WTC11 (cell line): ENCODE measurements at regions of chr10 and their contacts with region 1.

Region 1: GRCh38 chr10:103153302-103154197 is 39.5 kb downstream of the NT5C2 start:
- DNase-seq: no peak
- ATAC-seq: peak; percentile 74
- H3K4me3 Mint-ChIP-seq: peak overlapping the region; percentile 31; the same call in 1 of the 2 replicates
- H3K27ac Mint-ChIP-seq: peak overlapping the region; percentile 99
- H3K4me1 Mint-ChIP-seq: peaks cover 28% of the 10 kb centered on the region
- H3K27me3 Mint-ChIP-seq: no peaks in the 10 kb centered on the region
- CTCF ChIP-seq: no peak

Region 2: GRCh38 chr10:103238506-103239252 is 85.1 kb after region 1 on chr10:
- CTCF ChIA-PET with region 1: interaction called, 21 read pairs
- POLR2A ChIA-PET with region 1: interaction called, 4 read pairs
- DNase-seq: peak; percentile 52
- ATAC-seq: peak; percentile 95
- H3K4me3 Mint-ChIP-seq: no peak overlapping the region
- H3K27ac Mint-ChIP-seq: peak overlapping the region; percentile 87
- H3K4me1 Mint-ChIP-seq: peaks cover 33% of the 10 kb centered on the region
- H3K27me3 Mint-ChIP-seq: no peaks in the 10 kb centered on the region
- CTCF ChIP-seq: no peak